A673 (cell line): ENCODE measurements at regions of chr17 and their contacts with region 1.

Region 1: DNA sequence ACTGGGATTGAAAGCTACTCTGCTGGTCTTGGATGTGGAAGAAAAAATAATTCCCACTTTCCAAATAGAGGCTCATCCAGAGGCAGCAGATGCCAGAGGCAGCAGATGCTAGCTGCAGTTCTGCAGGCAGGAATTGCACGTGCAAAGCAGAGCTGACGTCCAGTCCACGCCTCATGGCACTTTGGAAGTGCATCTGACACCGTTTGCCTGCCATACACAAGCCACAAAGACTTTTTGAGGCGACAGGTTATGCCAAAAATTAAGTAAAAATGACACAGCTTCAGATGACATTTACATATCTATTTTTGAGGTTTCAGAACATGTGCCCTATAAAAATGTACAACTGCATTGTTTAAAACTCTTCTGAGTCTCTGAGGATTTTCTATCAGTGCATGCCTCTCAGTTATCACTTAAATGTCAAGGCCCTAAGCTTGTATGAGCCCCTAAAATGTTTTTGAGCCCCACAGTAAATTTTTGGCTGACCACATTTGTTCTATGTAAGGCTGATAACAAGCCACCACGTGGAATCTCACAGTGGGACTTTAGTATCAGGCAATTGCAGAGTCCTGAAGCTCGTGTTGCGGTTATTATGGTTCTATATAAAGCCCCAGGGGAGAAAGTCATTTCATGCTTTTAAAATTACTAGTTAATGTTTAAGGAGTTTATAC is 239.2 kb downstream of the PRKCA start:
- DNase-seq: peak; percentile 71
- H3K4me3 ChIP-seq: no peak overlapping the region
- H3K27ac ChIP-seq: no peak overlapping the region
- H3K4me1 ChIP-seq: peaks cover 29% of the 10 kb centered on the region
- H3K27me3 ChIP-seq: no peaks in the 10 kb centered on the region
- CTCF ChIP-seq: no peak

Region 2: GRCh38 chr17:66481271-66481670 is 60.3 kb before region 1 on chr17:
- CTCF ChIA-PET with region 1: no interaction called
- POLR2A ChIA-PET with region 1: no interaction called
- intact Hi-C with region 1: loop called (anchors 10 kb)
- DNase-seq: no peak
- H3K4me3 ChIP-seq: no peak overlapping the region
- H3K27ac ChIP-seq: no peak overlapping the region
- H3K4me1 ChIP-seq: no peaks in the 10 kb centered on the region
- H3K27me3 ChIP-seq: no peaks in the 10 kb centered on the region
- CTCF ChIP-seq: no peak

Region 3: GRCh38 chr17:66676421-66676820 is 134.8 kb after region 1 on chr17:
- CTCF ChIA-PET with region 1: no interaction called
- POLR2A ChIA-PET with region 1: no interaction called
- intact Hi-C with region 1: no loop called
- DNase-seq: no peak
- H3K4me3 ChIP-seq: no peak overlapping the region
- H3K27ac ChIP-seq: no peak overlapping the region
- H3K4me1 ChIP-seq: peaks cover 5% of the 10 kb centered on the region
- H3K27me3 ChIP-seq: no peaks in the 10 kb centered on the region
- CTCF ChIP-seq: no peak